ENCODE measurements at regions of chr1 and their contacts with region 1.

Region 1: DNA sequence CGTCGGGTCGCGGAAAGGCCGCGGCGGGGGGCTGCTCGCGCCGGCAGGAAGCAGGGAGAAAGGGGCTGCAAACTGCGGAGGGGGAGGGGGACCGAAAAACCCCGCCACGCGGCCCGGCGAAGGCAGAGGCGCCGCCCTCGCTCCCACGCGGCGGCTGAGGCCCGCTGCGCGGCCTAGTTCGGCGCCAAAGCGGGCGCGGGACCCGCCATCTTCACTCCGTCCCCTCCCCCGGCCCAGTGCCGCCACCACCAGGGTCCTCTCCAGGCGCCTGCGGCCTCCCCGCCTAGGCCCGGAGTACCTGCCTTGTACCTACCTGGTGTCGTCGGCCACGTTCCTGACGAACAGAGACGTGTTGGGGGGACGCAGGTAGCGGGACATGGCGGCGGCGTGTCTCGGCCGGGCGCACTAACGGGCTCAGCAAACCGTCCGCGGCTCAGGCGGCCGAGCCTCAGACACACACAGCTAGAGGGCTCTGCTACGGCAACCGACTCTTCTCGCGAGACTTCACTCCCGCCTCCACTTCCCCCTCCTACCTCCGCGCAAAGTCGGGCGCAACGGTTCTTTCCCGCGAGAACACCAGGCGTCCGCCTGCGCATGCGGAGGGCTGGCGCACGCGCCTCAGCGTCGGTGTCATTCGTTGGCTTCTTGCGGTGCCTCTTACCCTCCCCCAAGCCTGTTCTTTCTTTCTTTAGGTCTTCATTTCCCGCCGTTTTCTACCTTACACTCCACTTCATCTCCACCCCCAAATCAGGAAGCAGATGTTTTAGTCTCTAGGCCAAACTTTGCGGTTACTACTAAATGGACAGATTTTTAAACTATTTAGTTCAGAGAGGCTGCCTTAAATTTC is at the start of gene SRSF10:
- DNase-seq: peak; percentile 98
- ATAC-seq: peak; percentile 87
- H3K4me3 ChIP-seq: peak within 1 kb of the TSS; percentile 91
- H3K27ac ChIP-seq: peak within 1 kb of the TSS; percentile 98
- H3K4me1 ChIP-seq: peaks cover 14% of the 10 kb centered on the region
- H3K27me3 ChIP-seq: no peaks in the 10 kb centered on the region
- CTCF ChIP-seq: peak; percentile 20 to 35 (median 28); a peak in 4 of 6 replicates
- EP300 ChIP-seq: no peak
- POLR2A ChIP-seq: peak; percentile 100
- RAD21 ChIP-seq: no peak
- polyA plus RNA-seq, gene SRSF10: 166 to 187 TPM

Region 2: DNA sequence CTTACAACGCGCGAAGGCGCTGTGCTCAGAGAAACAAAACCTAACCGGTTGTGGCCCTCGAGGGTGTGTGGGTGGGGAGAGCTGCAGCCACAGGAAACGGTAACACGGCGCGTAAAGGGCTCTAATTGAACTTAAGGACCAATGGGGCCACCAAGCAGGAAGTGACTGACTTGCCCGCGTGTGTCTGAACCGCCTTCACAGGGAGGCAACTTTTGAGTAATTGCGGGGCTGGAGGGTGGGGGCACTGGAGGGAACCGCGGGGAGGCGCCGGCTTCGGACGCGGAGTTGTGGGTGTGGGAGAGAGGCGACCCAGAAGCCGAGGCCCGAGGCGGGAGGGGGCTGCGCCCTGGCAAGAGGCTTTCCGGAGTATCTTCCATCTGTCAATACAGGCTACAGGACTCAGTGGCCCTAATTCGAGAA is 21.1 kb before region 1 on chr1:
- CTCF ChIA-PET with region 1: interaction called, 10 read pairs
- POLR2A ChIA-PET with region 1: interaction called, 108 read pairs
- RAD21 ChIA-PET with region 1: interaction called, 29 read pairs
- SMC1A ChIA-PET with region 1: interaction called, 49 read pairs
- in situ Hi-C with region 1: no loop called
- intact Hi-C with region 1: loop called (anchors 2 kb)
- DNase-seq: peak; percentile 96
- ATAC-seq: peak; percentile 87
- H3K4me3 ChIP-seq: peak overlapping the region; percentile 87
- H3K27ac ChIP-seq: peak overlapping the region; percentile 97
- H3K4me1 ChIP-seq: peaks cover 31% of the 10 kb centered on the region
- H3K27me3 ChIP-seq: no peaks in the 10 kb centered on the region
- CTCF ChIP-seq: peak in 2 of 3 experiments; percentile 19 to 67; a peak in 3 of 6 replicates
- EP300 ChIP-seq: peak in 1 of 2 experiments; percentile 50; a peak in 1 of 4 replicates
- POLR2A ChIP-seq: peak; percentile 68
- RAD21 ChIP-seq: peak; percentile 41

Region 3: GRCh38 chr1:23964790-23965740 is 15.0 kb before region 1 on chr1:
- CTCF ChIA-PET with region 1: interaction called, 10 read pairs
- POLR2A ChIA-PET with region 1: interaction called, 108 read pairs
- RAD21 ChIA-PET with region 1: interaction called, 29 read pairs
- SMC1A ChIA-PET with region 1: interaction called, 49 read pairs
- in situ Hi-C with region 1: no loop called
- intact Hi-C with region 1: no loop called
- DNase-seq: no peak
- ATAC-seq: peak; percentile 7
- H3K4me3 ChIP-seq: peak overlapping the region; percentile 54
- H3K27ac ChIP-seq: peak overlapping the region; percentile 74
- H3K4me1 ChIP-seq: peaks cover 16% of the 10 kb centered on the region
- H3K27me3 ChIP-seq: no peaks in the 10 kb centered on the region
- CTCF ChIP-seq: no peak
- EP300 ChIP-seq: no peak
- POLR2A ChIP-seq: no peak
- RAD21 ChIP-seq: no peak

Region 4: DNA sequence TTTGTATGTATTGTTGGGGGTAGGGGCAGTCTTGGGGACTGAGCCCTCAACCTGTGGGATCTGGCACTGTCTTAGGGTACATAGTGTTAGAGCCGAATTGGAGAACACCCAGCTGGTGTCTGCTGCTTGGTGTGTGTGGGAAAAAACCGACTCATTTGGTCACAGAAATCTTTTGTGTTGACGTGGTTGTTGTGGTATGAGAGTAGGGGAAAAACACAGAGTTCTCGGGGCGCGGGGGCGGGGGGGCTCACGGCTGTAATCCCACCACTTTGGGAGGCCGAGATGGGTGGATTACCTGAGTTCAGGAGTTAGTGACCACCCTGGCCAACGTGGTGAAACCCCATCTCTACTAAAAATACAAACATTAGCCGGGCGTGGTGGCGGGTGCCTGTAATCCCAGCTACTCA is 15.3 kb after region 1 on chr1:
- CTCF ChIA-PET with region 1: no interaction called
- POLR2A ChIA-PET with region 1: interaction called, 7 read pairs
- RAD21 ChIA-PET with region 1: interaction called, 5 read pairs
- SMC1A ChIA-PET with region 1: interaction called, 18 read pairs
- in situ Hi-C with region 1: no loop called
- intact Hi-C with region 1: loop called (anchors 2 kb)
- DNase-seq: peak; percentile 50
- ATAC-seq: peak; percentile 89
- H3K4me3 ChIP-seq: no peak overlapping the region; the same call in 1 of the 2 replicates
- H3K27ac ChIP-seq: 0 out of 2 replicates have a peak overlapping the region, but pooled peaks have one; percentile 20
- H3K4me1 ChIP-seq: peaks cover 26% of the 10 kb centered on the region
- H3K27me3 ChIP-seq: no peaks in the 10 kb centered on the region
- CTCF ChIP-seq: no peak
- EP300 ChIP-seq: no peak
- POLR2A ChIP-seq: no peak
- RAD21 ChIP-seq: no peak

Measured in GM12878 (cell line).